ENCODE measurements at regions of chr5 and their contacts with region 1.

Region 1: GRCh38 chr5:94700592-94700991 is 82.1 kb downstream of the SLF1 start:
- DNase-seq: no peak
- H3K4me3 ChIP-seq: no peak overlapping the region
- H3K27ac ChIP-seq: no peak overlapping the region
- H3K4me1 ChIP-seq: peaks cover 15% of the 10 kb centered on the region
- CTCF ChIP-seq: no peak

Region 2: DNA sequence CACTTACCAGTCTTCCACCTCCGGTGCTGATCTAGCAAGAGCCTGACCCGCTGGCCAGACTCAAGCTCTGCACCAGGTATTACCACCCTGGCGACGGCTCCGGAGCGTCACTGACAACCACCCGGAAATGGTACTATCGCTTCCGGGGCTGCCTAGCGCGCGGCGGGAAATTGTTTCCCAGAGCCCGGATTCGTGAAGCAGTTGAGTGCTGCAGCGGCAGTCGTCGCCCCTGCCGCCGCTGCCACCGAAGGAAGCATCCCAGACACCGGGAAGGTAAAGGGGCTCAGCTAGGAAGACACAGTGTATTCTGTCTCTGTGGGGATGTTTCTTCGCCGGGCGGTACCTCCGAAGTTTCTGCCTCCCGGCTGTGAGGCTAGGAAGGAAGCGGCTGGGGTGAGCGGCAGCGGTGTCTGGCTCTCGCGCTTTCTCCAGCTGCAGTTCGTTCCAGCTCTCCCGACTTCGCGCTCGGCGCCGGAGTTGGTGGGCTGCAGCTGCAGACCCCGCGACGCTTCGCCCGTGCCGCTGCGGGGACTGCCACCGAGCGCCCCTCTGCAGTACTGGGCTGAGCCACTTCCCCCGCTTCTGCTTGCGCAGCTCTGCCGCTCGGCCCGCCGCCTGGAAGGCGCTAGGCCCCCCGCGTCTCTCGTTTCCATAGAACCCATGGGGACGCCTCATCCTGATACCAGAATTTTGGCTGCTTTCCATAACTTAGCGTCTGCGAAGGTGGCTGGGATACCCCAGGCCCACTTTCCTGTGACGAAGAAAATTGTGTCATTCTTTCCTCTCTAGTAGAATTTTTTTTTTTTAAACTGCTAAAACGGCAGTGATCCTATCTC is 81.9 kb before region 1 on chr5 and contains the starts of genes KIAA0825 and SLF1:
- CTCF ChIA-PET with region 1: no interaction called
- POLR2A ChIA-PET with region 1: interaction called, 3 read pairs
- intact Hi-C with region 1: loop called (anchors 5 kb)
- DNase-seq: peak; percentile 89
- H3K4me3 ChIP-seq: peak within 1 kb of the TSS; percentile 91
- H3K27ac ChIP-seq: peak within 1 kb of the TSS; percentile 62
- H3K4me1 ChIP-seq: peaks cover 51% of the 10 kb centered on the region
- CTCF ChIP-seq: no peak
- total RNA-seq, gene KIAA0825: 0.28 and 0.32 TPM in 2 replicates
- total RNA-seq, gene SLF1: 20.9 and 51.3 TPM in 2 replicates

Measured in OCI-LY7 (cell line).